G401 (cell line): ENCODE measurements at regions of chr14 and their contacts with region 1.

Region 1: GRCh38 chr14:105647764-105648608 is 121.6 kb downstream of the TMEM121 start:
- DNase-seq: no peak

Region 2: DNA sequence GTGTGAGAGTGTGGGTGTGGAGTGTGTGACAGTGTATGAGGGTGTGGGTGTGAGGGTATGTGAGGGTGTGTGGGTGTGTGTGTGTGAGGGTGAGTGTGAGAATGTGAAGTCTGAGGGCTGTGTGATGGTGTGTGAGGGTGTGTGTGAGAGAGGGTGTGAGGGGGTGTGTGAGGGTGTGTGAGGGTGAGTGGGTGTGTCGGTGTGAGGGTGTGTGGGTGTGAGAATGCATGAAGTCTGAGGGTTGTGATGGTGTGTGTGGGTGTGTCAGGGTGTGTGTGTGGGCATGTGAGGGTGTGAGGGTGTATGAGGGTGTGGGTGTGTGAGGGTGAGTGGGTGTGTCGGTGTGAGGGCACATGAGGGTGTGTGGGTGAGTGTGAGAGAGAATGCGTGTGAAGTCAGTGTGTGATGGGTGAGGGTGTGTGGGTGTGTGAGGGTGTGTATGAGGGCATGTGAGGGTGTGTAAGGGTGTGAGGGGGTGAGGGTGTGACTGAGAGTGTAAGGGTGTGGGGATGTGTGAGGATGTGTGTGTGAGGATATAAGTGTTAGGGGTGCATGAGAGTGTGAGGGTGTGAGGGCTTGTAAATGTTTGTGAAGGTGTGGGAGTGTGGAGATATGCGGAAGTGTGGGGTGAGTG is 85.2 kb before region 1 on chr14:
- in situ Hi-C with region 1: no loop called
- DNase-seq: no peak

Region 3: DNA sequence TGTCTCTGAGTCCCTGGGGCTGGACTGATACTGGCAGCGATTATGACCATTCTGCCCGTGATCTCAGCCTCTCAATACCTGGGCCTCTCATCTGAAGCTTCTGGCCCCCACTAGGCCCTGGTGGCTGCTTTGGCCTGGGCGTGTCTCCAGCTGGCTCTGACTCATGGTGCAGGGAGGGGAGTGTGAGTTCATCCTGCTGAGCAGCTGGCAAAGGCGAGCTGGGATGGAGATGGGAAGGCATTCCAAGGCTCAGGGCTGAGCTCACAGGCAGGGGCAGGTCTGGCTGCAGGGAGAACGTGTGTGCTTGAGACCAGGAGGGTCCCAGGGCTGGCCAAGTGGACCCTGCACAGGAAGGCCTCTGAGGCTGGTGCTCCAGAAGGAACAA is 100.2 kb after region 1 on chr14:
- in situ Hi-C with region 1: loop called (anchors 25 kb)
- DNase-seq: peak; percentile 89